GM13977 (cell line): ENCODE measurements at regions of chr12 and their contacts with region 1.

Region 1: GRCh38 chr12:81644503-81644902 is 114.6 kb downstream of the PPFIA2 start:
- DNase-seq: peak; percentile 39
- CTCF ChIP-seq: peak; percentile 45

Region 2: GRCh38 chr12:80230068-80230467 is 1414.4 kb before region 1 on chr12:
- in situ Hi-C with region 1: no loop called
- DNase-seq: no peak
- CTCF ChIP-seq: no peak

Region 3: GRCh38 chr12:82326905-82327503 is 682.5 kb after region 1 on chr12:
- in situ Hi-C with region 1: loop called (anchors 25 kb)
- DNase-seq: peak; percentile 6
- CTCF ChIP-seq: peak; percentile 26